Posterior vena cava (tissue), 2 donors: ENCODE measurements at regions of chr6 and their contacts with region 1.

Region 1: GRCh38 chr6:152669895-152670294 is 27.8 kb upstream of the MYCT1 start:
- DNase-seq: no peak

Region 2: GRCh38 chr6:152552616-152553209 is 117.2 kb before region 1 on chr6:
- intact Hi-C with region 1: loop called in 1 of 2 experiments (anchors 5 kb)
- DNase-seq: peak; percentile 86